Gastrocnemius medialis (tissue), 4 donors: ENCODE measurements at regions of chr1 and their contacts with region 1.

Region 1: GRCh38 chr1:12619792-12620487 is 1.9 kb upstream of the DHRS3 start:
- DNase-seq: peak; percentile 82 to 86
- ATAC-seq: peak; percentile 27 to 28
- H3K4me3 ChIP-seq: peak overlapping the region; percentile 72 to 90 (median 86)
- H3K27ac ChIP-seq: peak overlapping the region; percentile 87 to 97 (median 94)
- H3K4me1 ChIP-seq: peaks cover 33 to 42% of the 10 kb centered on the region in 2 donors
- H3K27me3 ChIP-seq: no peaks in the 10 kb centered on the region
- CTCF ChIP-seq: peak; percentile 95 to 98 (median 97)
- POLR2A ChIP-seq: no peak

Region 2: GRCh38 chr1:12229835-12230548 is 389.9 kb before region 1 on chr1 and contains the start of gene VPS13D:
- in situ Hi-C with region 1: no loop called
- intact Hi-C with region 1: loop called (anchors 5 kb)
- DNase-seq: peak; percentile 68 to 74
- ATAC-seq: peak; percentile 63 to 71
- H3K4me3 ChIP-seq: peak within 1 kb of the TSS; percentile 82 to 100 (median 94)
- H3K27ac ChIP-seq: peak within 1 kb of the TSS; percentile 97 to 99 (median 98)
- H3K4me1 ChIP-seq: peaks cover 25 to 28% of the 10 kb centered on the region in 2 donors
- H3K27me3 ChIP-seq: no peaks in the 10 kb centered on the region
- CTCF ChIP-seq: peak; percentile 89 to 99 (median 98)
- POLR2A ChIP-seq: peak; percentile 90 to 93
- total RNA-seq, gene VPS13D: 60.9 to 91.6 (median 71.6) TPM

Region 3: DNA sequence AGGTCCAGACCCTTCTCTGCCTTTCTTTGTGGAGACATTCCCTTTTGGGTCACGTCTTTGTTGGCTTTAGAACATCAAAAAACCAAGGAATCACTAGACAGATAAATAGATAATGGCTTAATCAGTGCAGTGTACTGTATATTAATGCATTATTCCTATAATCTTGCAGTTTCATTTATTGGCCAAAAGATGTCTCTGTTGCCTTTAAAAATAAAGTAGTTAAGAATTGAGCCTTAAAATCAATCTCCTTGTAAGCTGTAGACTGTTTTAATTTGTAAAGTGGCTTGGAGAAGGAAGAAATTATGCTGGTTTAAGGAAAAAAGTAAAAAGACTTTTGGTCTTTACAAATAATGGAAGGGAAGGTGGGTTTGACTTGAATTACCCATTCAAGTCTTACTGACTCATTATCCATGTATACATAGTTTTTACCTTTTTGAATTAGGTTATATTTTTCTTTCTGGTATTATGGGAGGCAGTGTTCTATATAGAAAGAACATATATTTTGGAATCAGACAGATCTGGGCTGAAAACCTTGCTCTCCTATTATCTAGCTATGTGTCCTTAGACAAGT is 305.5 kb before region 1 on chr1:
- in situ Hi-C with region 1: loop called in 3 of 4 experiments (anchors 10 kb)
- intact Hi-C with region 1: loop called (anchors 1 kb)
- DNase-seq: no peak
- ATAC-seq: peak; percentile 40 to 62
- H3K4me3 ChIP-seq: no peak overlapping the region
- H3K27ac ChIP-seq: peak overlapping the region; percentile 18 to 48 (median 42)
- H3K4me1 ChIP-seq: peaks cover 15 to 21% of the 10 kb centered on the region in 2 donors
- H3K27me3 ChIP-seq: no peaks in the 10 kb centered on the region
- CTCF ChIP-seq: peak in 2 of 5 experiments; percentile 31 to 47
- POLR2A ChIP-seq: no peak

Region 4: DNA sequence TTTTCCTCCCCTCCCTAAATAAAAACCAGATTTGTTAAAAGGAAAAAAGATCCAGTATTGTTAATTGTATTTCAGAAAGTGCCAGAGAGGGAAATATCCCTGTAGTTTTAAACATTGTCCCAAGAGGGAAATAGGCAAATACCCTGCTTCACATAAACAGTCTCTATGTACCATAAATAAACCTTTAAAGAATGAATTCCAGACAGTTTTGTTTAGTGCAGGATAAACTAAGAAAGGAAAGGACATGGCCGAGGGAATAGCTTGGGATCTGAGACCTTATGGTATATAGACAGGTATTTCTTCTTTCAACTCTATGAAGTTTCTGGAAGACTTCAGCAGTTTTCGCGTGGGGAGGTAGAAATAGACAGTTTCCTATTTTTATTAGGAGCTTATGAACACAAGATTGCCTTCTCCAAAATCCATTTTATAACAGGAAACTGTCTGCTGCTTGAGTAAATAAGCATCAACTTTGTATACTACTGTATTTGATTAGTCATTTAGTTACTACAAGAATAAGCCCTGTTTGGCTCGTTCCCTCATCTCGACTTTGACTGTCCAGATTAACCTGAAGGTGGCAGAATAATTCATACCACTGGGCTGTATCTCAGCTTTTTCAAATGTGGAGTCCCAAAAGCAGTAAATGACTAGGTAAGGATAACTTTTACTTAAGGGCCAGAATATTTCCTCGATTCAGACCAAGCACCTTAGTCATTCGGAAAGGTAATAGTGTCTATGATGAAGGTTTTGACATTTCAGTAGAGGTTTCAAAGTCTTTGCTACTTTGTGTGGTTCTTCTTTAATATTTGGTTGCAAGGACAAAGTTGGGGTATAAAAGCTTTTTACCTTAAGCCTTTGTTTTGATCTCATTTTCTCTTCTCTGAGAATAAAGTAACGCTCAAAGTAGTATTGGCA is 212.6 kb before region 1 on chr1:
- in situ Hi-C with region 1: loop called (anchors 5 to 10 kb)
- intact Hi-C with region 1: loop called (anchors 1 kb)
- DNase-seq: peak; percentile 30 to 40
- ATAC-seq: peak; percentile 90 to 91
- H3K4me3 ChIP-seq: no peak overlapping the region
- H3K27ac ChIP-seq: peak overlapping the region; percentile 49 to 71 (median 66)
- H3K4me1 ChIP-seq: peaks cover 44 to 48% of the 10 kb centered on the region in 2 donors
- H3K27me3 ChIP-seq: no peaks in the 10 kb centered on the region
- CTCF ChIP-seq: peak in 3 of 5 experiments; percentile 34 to 59 (median 55)
- POLR2A ChIP-seq: no peak

Region 5: DNA sequence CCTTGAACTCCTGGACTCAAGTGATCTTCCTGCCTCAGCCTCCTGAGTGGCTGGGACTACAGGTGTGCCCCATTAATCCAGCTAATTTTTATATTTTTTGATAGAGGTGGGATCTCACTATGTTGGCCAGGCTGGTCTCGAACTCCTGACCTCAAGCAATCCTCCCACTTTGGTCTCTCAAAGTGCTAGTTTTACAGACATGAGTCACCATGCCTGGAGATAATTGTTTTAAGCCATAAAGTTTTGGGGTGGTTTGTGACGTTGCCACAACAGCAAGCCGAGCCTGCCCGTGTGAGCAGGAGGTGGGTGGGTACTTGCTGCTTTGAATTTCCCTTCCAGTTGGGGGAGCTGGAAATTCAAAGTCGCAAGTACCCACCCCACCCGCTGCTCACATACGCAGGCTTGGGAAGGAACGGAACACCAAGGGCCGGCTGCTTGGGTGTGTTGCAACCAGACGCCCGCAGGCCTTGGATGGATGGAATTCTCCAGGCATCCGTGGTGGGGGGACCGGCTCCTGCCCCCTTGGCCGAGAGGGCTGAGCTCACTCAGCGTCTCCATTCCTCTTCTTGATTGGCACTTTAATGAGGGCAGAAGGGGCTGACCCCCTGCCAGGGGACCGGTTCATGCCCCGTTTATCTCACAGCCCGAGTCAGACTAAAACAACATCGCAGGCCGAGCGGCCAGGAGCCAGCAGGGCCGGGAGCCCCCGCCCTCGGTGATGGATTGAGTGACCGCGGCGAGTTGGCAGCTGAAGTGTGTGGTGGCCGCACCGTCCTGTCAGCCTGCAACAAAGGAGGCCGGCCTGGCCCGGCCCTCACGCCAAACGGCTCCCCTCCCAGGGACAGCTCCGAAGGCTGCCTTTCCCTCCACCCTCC is 80.0 kb before region 1 on chr1:
- in situ Hi-C with region 1: no loop called
- intact Hi-C with region 1: loop called (anchors 1 kb)
- DNase-seq: peak; percentile 77 to 89
- ATAC-seq: peak; percentile 83 to 91
- H3K4me3 ChIP-seq: peak overlapping the region; percentile 22 to 40 (median 37)
- H3K27ac ChIP-seq: peak overlapping the region; percentile 75 to 83 (median 81)
- H3K4me1 ChIP-seq: peaks cover 13 to 18% of the 10 kb centered on the region in 2 donors
- H3K27me3 ChIP-seq: no peaks in the 10 kb centered on the region
- CTCF ChIP-seq: no peak
- POLR2A ChIP-seq: peak in 1 of 2 donors; percentile 12

Region 6: GRCh38 chr1:12565094-12565965 is 54.6 kb before region 1 on chr1:
- in situ Hi-C with region 1: no loop called
- intact Hi-C with region 1: no loop called
- DNase-seq: no peak
- ATAC-seq: no peak
- H3K4me3 ChIP-seq: no peak overlapping the region
- H3K27ac ChIP-seq: peak overlapping the region; percentile 51 to 67 (median 60)
- H3K4me1 ChIP-seq: peaks cover 8 to 14% of the 10 kb centered on the region in 2 donors
- H3K27me3 ChIP-seq: no peaks in the 10 kb centered on the region
- CTCF ChIP-seq: no peak
- POLR2A ChIP-seq: no peak

Region 7: GRCh38 chr1:12579793-12580499 is 40.0 kb before region 1 on chr1:
- in situ Hi-C with region 1: no loop called
- intact Hi-C with region 1: no loop called
- DNase-seq: peak; percentile 81 to 93
- ATAC-seq: peak; percentile 92 to 95
- H3K4me3 ChIP-seq: no peak overlapping the region
- H3K27ac ChIP-seq: peak overlapping the region; percentile 82 to 93 (median 90)
- H3K4me1 ChIP-seq: peaks cover 18 to 23% of the 10 kb centered on the region in 2 donors
- H3K27me3 ChIP-seq: no peaks in the 10 kb centered on the region
- CTCF ChIP-seq: no peak
- POLR2A ChIP-seq: peak in 1 of 2 donors; percentile 13

Region 8: GRCh38 chr1:12658531-12659453 is 38.9 kb after region 1 on chr1:
- in situ Hi-C with region 1: no loop called
- intact Hi-C with region 1: loop called (anchors 2 kb)
- DNase-seq: peak; percentile 32 to 68
- ATAC-seq: peak; percentile 79 to 90
- H3K4me3 ChIP-seq: no peak overlapping the region
- H3K27ac ChIP-seq: no peak overlapping the region
- H3K4me1 ChIP-seq: peaks cover 0 to 2% of the 10 kb centered on the region in 2 donors
- H3K27me3 ChIP-seq: no peaks in the 10 kb centered on the region
- CTCF ChIP-seq: peak; percentile 89 to 96 (median 95)
- POLR2A ChIP-seq: no peak